PC-9 (cell line): ENCODE measurements at regions of chr1 and their contacts with region 1.

Region 1: DNA sequence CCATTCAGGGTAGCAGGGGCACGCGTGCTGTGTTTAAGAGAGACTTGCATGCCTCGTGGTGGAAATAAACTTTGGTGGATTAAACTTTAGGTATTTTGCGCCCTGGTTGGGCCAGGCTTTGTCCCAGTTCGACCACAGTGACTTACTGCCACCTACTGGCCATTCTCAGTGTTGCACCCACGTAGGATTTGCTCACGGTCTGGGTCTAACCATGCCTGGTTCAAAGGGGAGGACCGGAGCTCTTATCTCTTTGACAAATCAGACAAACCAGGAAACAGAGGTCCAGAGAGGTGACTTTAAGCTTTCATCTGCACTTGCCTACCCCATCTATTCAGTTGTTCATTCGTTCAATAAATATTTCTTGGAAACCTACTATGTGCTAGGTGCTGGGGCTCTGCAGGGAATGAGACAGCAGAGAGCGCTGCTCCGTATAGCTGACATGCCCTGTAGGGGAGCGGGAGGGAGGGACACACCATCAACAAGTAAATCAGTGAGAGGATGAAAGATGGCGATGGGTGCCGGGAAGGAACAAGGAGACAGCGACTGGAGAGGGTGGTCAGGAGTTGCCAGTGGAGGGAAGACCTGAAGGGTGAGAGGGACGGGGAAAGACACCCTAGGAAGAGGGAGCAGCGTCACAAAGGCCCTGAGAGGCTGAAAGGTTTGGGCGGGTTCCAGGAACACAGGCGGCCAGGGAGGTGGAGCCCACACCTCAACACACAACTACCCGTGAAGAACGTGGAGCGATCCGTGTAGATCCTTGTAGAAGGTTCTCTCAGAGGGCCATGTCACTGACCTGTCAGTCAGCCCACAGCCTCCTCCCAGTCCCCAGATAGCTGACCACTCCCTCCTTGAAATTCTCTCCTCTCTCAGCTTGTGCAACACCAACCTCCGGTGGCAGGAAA is 27.2 kb upstream of the TINAGL1 start:
- DNase-seq: peak; percentile 93
- H3K4me3 ChIP-seq: peak overlapping the region; percentile 51
- H3K27ac ChIP-seq: peak overlapping the region; percentile 45
- H3K4me1 ChIP-seq: peaks cover 27% of the 10 kb centered on the region
- H3K27me3 ChIP-seq: no peaks in the 10 kb centered on the region
- CTCF ChIP-seq: peak; percentile 100

Region 2: GRCh38 chr1:31296486-31297276 is 252.5 kb before region 1 on chr1 and contains the starts of genes SNRNP40 and ZCCHC17:
- CTCF ChIA-PET with region 1: no interaction called
- POLR2A ChIA-PET with region 1: no interaction called
- intact Hi-C with region 1: loop called (anchors 2 kb)
- DNase-seq: peak; percentile 92 to 97
- H3K4me3 ChIP-seq: peak within 1 kb of the TSS; percentile 72
- H3K27ac ChIP-seq: 0 out of 2 replicates have a peak within 1 kb of the TSS, but pooled peaks have one; percentile 24
- H3K4me1 ChIP-seq: peaks cover 9% of the 10 kb centered on the region; the same call in 1 of the 2 replicates
- H3K27me3 ChIP-seq: no peaks in the 10 kb centered on the region
- CTCF ChIP-seq: no peak
- total RNA-seq, gene SNRNP40: 56.0 and 59.5 TPM in 2 replicates
- total RNA-seq, gene ZCCHC17: 25.8 and 26.8 TPM in 2 replicates

Region 3: GRCh38 chr1:31413405-31414125 is 135.6 kb before region 1 on chr1:
- CTCF ChIA-PET with region 1: no interaction called
- POLR2A ChIA-PET with region 1: no interaction called
- intact Hi-C with region 1: loop called (anchors 1 kb)
- DNase-seq: peak in 1 of 2 experiments; percentile 79
- H3K4me3 ChIP-seq: peak overlapping the region; percentile 89
- H3K27ac ChIP-seq: peak overlapping the region; percentile 37; the same call in 1 of the 2 replicates
- H3K4me1 ChIP-seq: peaks cover 38% of the 10 kb centered on the region
- H3K27me3 ChIP-seq: no peaks in the 10 kb centered on the region
- CTCF ChIP-seq: no peak

Region 4: GRCh38 chr1:31470794-31471340 is 78.3 kb before region 1 on chr1:
- CTCF ChIA-PET with region 1: interaction called, 3 read pairs
- POLR2A ChIA-PET with region 1: interaction called, 6 read pairs
- intact Hi-C with region 1: loop called (anchors 1 kb)
- DNase-seq: peak; percentile 10 to 49
- H3K4me3 ChIP-seq: peak overlapping the region; percentile 43; the same call in 1 of the 2 replicates
- H3K27ac ChIP-seq: peak overlapping the region; percentile 97
- H3K4me1 ChIP-seq: peaks cover 26% of the 10 kb centered on the region
- H3K27me3 ChIP-seq: no peaks in the 10 kb centered on the region
- CTCF ChIP-seq: no peak

Region 5: GRCh38 chr1:31593770-31594632 is 44.8 kb after region 1 on chr1:
- CTCF ChIA-PET with region 1: interaction called, 5 read pairs
- POLR2A ChIA-PET with region 1: no interaction called
- intact Hi-C with region 1: loop called (anchors 1 kb)
- DNase-seq: peak; percentile 81 to 85
- H3K4me3 ChIP-seq: no peak overlapping the region
- H3K27ac ChIP-seq: no peak overlapping the region
- H3K4me1 ChIP-seq: peaks cover 41% of the 10 kb centered on the region
- H3K27me3 ChIP-seq: no peaks in the 10 kb centered on the region
- CTCF ChIP-seq: peak; percentile 99